H1 (cell line): ENCODE measurements at regions of chr1 and their contacts with region 1.

Region 1: GRCh38 chr1:28248283-28249012 is 10.9 kb upstream of the SESN2 start:
- DNase-seq: peak in 1 of 2 experiments; percentile 88
- H3K4me3 ChIP-seq: peak overlapping the region in 2 of 4 experiments; percentile 23 to 31; a peak in 3 of 8 replicates
- H3K27ac ChIP-seq: peak overlapping the region; percentile 18; the same call in 1 of the 2 replicates
- H3K4me1 ChIP-seq: peaks cover 6 to 19% (median 10%) of the 10 kb centered on the region in 4 experiments; a peak in 6 of 7 replicates
- H3K27me3 ChIP-seq: no peaks in the 10 kb centered on the region
- CTCF ChIP-seq: peak; percentile 69 to 91 (median 71)
- EP300 ChIP-seq: no peak
- POLR2A ChIP-seq: peak in 1 of 2 experiments; percentile 22; a peak in 1 of 3 replicates
- RAD21 ChIP-seq: peak; percentile 82 to 84

Region 2: DNA sequence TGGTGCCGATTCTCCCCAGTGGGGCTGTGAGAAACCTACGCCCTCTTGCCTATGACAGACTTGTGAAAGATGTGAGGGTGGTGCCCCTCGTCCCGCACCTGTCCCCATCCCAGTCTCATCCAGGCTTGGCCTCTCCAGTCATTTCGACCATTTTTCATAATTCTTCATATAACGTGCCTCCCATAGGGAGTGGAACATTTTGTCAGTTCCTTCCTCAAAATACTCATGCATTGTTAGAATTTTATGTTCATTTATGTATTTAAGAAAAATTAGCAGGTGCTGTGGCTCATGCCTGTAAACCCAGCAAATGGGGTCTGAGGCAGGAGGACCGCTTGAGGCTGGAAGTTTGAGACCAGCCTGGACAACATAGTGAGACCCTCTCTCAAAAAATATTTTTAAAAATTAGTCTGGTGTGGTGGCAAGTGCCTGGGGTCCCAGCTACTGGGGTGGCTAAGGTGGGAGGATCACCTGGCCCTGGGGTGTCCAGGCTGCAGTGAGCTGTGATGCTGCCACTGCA is 333.3 kb before region 1 on chr1:
- CTCF ChIA-PET with region 1: no interaction called
- POLR2A ChIA-PET with region 1: no interaction called
- DNase-seq: no peak
- H3K4me3 ChIP-seq: peak overlapping the region in 1 of 4 experiments; percentile 30; a peak in 3 of 8 replicates
- H3K27ac ChIP-seq: no peak overlapping the region; the same call in 1 of the 2 replicates
- H3K4me1 ChIP-seq: no peaks in the 10 kb centered on the region; a peak in 2 of 7 replicates
- H3K27me3 ChIP-seq: peaks cover 0 to 9% (median 8%) of the 10 kb centered on the region in 4 experiments; a peak in 6 of 7 replicates
- CTCF ChIP-seq: no peak
- EP300 ChIP-seq: no peak
- POLR2A ChIP-seq: no peak
- RAD21 ChIP-seq: no peak

Region 3: DNA sequence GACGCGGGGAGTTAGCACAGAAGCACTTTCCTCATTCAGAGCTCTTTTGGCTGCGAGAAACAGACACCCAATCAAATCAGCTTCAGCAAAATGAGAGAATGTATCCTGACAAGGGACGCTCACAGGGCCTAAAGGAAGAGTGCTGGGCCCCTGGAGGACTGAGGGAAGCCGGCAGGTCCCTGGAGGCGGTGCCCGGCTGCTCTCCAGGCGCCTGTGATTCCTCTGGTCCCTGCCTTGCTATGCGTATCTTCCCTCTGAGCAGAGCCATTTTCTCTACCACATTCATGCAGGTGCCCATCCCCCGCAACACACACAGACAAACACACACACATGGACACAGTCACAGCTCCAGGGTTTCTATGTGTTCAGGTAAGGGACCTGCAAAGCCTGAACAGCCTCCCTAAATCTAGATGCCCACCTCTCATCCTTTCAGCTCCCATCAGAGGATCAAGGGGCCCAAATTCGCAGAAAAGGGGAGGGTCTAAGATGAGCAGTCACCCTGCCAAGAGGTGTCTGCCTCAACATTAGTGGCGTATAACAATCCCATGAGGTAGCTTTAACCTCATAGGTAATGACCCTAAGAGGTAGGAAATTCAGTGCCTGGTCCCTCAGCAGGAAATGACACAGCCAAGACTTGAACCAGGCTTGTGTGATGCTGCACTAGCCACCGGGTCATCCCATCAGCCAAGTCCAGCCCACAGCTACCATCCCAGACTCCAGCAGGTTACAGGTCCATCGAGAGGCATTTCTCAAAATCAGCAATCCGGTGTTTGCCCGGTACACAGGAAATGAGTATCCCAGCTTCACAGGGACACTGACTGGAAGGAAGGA is 101.0 kb before region 1 on chr1:
- CTCF ChIA-PET with region 1: no interaction called
- POLR2A ChIA-PET with region 1: no interaction called
- DNase-seq: peak in 1 of 2 experiments; percentile 54
- H3K4me3 ChIP-seq: peak overlapping the region in 1 of 4 experiments; percentile 14; a peak in 1 of 8 replicates
- H3K27ac ChIP-seq: peak overlapping the region; percentile 26; the same call in 1 of the 2 replicates
- H3K4me1 ChIP-seq: peaks cover 0 to 10% (median 7%) of the 10 kb centered on the region in 4 experiments; a peak in 6 of 7 replicates
- H3K27me3 ChIP-seq: no peaks in the 10 kb centered on the region
- CTCF ChIP-seq: no peak
- EP300 ChIP-seq: no peak
- POLR2A ChIP-seq: no peak
- RAD21 ChIP-seq: no peak

Region 4: DNA sequence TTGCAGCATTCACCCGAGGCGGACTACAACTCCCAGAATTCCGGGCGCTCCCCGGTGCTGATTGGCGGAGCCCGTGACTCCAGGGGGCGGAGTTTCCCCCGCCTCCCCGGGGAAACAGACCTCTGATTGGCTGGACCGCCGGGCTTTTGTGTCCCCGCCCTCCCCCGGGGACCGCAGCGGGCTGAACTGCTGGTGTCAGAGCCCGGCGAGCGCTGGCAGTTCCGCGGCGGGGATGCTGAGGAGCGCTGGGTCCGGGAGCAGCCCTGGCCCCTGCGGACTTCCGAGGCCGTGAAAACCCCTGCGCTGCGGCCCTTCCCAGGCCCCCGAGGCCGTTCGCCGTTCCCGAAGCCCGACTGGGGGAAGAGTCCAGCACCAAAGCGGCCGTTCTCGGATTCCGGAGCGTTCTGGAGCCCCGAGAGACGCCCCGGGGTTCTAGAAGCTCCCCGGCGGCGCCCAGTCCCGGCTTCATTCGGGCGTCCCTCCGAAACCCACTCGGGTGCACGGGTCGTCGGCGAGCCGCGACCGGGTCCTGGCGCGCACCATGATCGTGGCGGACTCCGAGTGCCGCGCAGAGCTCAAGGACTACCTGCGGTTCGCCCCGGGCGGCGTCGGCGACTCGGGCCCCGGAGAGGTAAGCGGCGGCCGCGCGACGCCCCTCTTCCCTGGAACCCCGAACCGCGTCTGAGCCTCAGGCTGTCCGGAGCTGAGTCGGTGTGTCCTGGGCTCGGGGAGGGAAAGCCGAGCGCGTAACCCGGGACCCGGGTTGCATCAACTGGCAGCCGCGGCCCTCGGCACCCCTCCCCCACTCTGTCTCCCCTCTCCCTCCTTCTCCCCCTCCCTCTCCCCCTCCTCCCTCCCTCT is 11.1 kb after region 1 on chr1 and contains the start of gene SESN2:
- CTCF ChIA-PET with region 1: interaction called, 61 read pairs
- POLR2A ChIA-PET with region 1: interaction called, 296 read pairs
- DNase-seq: peak; percentile 94 to 99
- H3K4me3 ChIP-seq: peak within 1 kb of the TSS; percentile 73 to 97 (median 88)
- H3K27ac ChIP-seq: peak within 1 kb of the TSS; percentile 67; the same call in 1 of the 2 replicates
- H3K4me1 ChIP-seq: peaks cover 3 to 17% (median 11%) of the 10 kb centered on the region in 4 experiments; a peak in 5 of 7 replicates
- H3K27me3 ChIP-seq: no peaks in the 10 kb centered on the region
- CTCF ChIP-seq: no peak
- EP300 ChIP-seq: no peak
- POLR2A ChIP-seq: peak; percentile 79 to 95
- RAD21 ChIP-seq: no peak
- total RNA-seq, gene SESN2: 22.6 and 25.1 TPM in 2 replicates

Region 5: DNA sequence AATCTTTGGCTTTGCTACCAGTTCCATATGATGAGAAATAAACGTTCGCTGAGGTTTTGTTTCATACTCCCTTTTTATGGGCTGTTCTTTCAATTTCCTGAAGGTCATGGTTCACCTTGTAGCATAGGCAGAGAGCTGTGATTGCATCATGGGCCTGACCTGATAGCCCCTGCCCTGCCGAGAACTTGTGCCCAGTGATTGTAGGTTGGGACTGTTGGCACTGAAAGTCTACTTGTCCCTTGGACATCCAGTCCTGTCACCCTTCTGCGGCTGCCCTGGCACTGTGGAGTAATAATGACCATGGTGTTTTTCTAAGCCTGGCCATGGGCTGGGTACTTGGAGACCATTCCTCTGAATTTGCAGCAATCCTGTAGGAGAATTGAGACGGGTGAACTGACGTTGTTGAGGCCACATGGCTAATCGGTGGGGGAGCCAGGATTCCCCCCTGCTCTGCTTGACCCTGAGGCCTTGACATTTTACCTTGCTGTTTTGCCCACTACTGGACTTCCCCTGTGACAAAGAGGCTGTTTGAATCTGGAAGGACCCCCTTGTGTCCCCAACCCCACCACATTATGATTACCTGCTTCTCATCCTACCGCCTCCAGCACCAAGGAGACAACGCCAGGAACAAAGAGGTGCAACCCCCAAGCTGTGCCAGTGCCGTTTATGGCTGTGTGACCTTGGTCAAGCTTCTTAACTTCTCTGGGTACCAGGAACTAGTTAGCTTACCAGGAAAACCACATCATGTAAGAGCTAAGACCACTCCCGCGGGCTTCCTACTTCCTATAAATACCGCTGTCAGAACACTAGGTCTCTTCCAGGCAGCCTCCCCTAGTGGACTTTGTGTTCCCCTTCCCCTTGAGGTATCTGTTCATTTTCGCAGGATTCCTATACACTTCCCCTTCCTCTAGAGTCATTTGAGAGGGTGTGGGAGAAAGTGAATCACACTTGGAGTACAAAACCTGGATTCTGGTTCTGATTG is 34.3 kb after region 1 on chr1:
- CTCF ChIA-PET with region 1: interaction called, 9 read pairs
- POLR2A ChIA-PET with region 1: interaction called, 14 read pairs
- DNase-seq: no peak
- H3K4me3 ChIP-seq: no peak overlapping the region
- H3K27ac ChIP-seq: peak overlapping the region; percentile 21; the same call in 1 of the 2 replicates
- H3K4me1 ChIP-seq: no peaks in the 10 kb centered on the region
- H3K27me3 ChIP-seq: no peaks in the 10 kb centered on the region
- CTCF ChIP-seq: no peak
- EP300 ChIP-seq: no peak
- POLR2A ChIP-seq: no peak
- RAD21 ChIP-seq: no peak

Region 6: DNA sequence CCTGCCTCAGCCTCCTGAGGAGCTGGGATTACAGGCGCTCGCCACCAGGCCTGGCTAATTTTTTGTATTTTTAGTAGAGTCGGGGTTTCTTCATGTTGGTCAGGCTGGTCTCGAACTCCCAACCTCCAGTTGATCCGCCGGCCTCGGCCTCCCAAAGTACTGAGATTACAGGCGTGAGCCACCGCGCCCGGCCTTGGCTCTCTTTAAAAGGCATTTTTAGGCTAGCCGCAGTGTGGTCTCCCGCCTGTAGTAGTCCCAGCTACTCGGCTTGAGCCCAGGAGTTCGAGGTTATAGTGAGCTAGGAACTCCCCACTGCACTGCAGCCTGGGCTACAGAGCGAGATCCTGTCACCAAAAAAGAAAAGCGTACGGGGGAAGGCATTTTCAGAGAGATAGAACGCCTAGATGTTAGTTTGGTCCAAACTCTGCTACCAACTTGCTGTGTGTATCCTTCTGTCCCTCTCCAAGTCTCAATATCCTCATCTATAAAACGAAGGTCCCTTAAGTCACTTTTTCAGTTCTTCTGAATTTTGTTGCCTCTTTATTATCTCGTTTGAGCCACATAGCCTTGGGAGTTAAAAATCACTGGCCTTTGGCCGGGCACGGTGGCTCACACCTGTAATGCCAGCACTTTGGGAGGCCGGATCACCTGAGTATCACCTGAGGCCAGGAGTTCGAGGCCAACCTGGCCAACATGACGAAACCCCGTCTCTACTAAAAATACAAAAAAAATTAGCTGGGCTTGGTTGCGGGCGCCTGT is 81.1 kb after region 1 on chr1:
- CTCF ChIA-PET with region 1: interaction called, 9 read pairs
- POLR2A ChIA-PET with region 1: interaction called, 12 read pairs
- DNase-seq: peak in 1 of 2 experiments; percentile 56
- H3K4me3 ChIP-seq: peak overlapping the region; percentile 49 to 74 (median 72)
- H3K27ac ChIP-seq: peak overlapping the region; percentile 55; the same call in 1 of the 2 replicates
- H3K4me1 ChIP-seq: no peaks in the 10 kb centered on the region; a peak in 1 of 7 replicates
- H3K27me3 ChIP-seq: no peaks in the 10 kb centered on the region; a peak in 1 of 7 replicates
- CTCF ChIP-seq: peak in 2 of 3 experiments; percentile 6 to 22; a peak in 2 of 4 replicates
- EP300 ChIP-seq: no peak
- POLR2A ChIP-seq: no peak; a peak in 1 of 3 replicates
- RAD21 ChIP-seq: peak in 1 of 2 experiments; percentile 17; a peak in 1 of 4 replicates

Region 7: GRCh38 chr1:28505406-28506187 is 257.1 kb after region 1 on chr1 and contains the start of gene RCC1:
- CTCF ChIA-PET with region 1: interaction called, 3 read pairs
- POLR2A ChIA-PET with region 1: interaction called, 98 read pairs
- DNase-seq: peak; percentile 91 to 92
- H3K4me3 ChIP-seq: peak within 1 kb of the TSS; percentile 75 to 96 (median 90)
- H3K27ac ChIP-seq: peak within 1 kb of the TSS; percentile 95
- H3K4me1 ChIP-seq: peaks cover 5 to 17% (median 9%) of the 10 kb centered on the region in 4 experiments; a peak in 5 of 7 replicates
- H3K27me3 ChIP-seq: no peaks in the 10 kb centered on the region
- CTCF ChIP-seq: 0 out of 4 replicates have a peak, but pooled peaks of 1 of the 3 experiments have one; percentile 3
- EP300 ChIP-seq: no peak
- POLR2A ChIP-seq: peak; percentile 100
- RAD21 ChIP-seq: no peak
- total RNA-seq, gene RCC1: 98.4 and 101 TPM in 2 replicates